ENCODE measurements at regions of chr1 and their contacts with region 1.

Region 1: GRCh38 chr1:215526553-215527151 is 40.5 kb upstream of the KCTD3 start:
- DNase-seq: no peak
- H3K4me3 Mint-ChIP-seq: no peak overlapping the region
- H3K27ac Mint-ChIP-seq: no peak overlapping the region
- H3K4me1 Mint-ChIP-seq: no peaks in the 10 kb centered on the region
- H3K27me3 Mint-ChIP-seq: peaks cover 2% of the 10 kb centered on the region

Region 2: DNA sequence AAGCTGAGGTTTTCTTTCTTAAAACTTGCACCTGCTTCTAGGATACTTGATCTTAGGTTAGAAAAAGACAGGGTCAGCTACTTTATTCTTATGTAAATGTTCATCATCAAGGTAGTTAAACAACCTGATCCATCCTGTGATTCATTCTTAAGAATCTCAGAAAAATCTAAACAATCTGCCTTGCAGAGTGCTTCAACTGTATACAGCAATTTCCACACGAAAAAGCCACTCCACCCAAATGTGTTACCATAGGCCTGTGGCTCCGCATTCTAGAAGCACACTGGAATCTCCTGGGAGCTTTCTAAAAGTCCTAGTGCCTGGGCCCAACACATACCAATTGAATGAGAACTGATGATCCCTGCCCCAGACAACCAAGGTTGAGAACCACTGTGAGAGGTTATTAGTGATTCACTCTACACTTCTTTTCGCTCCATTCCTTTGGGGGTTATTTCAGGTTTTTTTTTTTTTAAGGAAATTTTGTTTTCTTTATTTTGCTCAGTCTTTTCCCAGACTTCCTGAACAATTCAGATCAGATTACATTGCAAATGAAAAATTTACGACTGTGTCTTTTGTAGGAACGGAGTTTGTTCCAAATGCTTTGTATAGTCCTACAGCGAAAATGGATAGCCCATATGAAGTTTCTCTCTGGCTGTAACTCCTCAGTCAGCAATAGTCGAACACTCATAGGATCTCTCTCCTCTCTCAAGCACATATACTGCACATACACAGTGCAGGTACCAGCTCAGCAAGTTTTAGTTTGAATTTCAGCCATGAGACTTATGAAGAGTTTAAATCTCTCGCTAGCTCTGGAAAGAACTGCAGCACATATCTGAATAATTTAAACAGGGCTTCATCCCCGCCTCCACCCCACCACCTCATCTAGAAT is 1229.5 kb before region 1 on chr1:
- intact Hi-C with region 1: no loop called
- DNase-seq: no peak
- H3K4me3 Mint-ChIP-seq: no peak overlapping the region
- H3K27ac Mint-ChIP-seq: no peak overlapping the region
- H3K4me1 Mint-ChIP-seq: no peaks in the 10 kb centered on the region
- H3K27me3 Mint-ChIP-seq: no peaks in the 10 kb centered on the region

Region 3: DNA sequence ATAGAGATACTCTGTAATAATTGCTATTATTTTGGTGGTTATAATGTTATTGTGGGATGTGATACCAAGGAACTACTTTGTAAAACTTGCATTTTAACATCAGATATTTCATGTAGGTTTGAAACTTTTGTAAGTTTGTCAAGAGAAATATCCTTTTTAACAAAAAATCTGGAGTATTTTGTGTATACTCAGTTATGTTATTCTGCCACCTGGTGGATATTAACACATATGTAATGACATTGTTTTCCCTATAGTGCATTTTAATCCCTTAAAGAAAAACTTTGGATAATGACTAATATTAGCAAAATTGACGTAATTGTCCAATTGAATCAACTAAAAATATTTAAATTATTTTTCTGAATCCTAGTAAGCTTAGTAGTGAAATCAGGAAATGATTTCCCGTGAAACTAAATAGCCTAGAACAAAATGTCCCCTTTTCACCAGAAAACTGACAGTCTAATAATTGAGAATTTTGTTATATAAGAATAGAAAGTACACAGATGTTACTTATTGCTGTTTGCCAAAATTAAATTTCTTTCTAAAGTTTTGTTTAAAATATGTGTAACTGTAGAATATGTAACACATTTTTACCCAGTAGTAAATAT is 80.0 kb after region 1 on chr1:
- intact Hi-C with region 1: loop called (anchors 5 kb)
- DNase-seq: no peak
- H3K4me3 Mint-ChIP-seq: no peak overlapping the region
- H3K27ac Mint-ChIP-seq: no peak overlapping the region
- H3K4me1 Mint-ChIP-seq: no peaks in the 10 kb centered on the region
- H3K27me3 Mint-ChIP-seq: no peaks in the 10 kb centered on the region

Measured in activated T-helper 1 cell treated with anti-CD3 and anti-CD28 coated beads, Interleukin-12 subunit alpha, Interleukin-12 subunit beta, Interleukin-2, Interleukin-4 antibody, amounts not matched to agents 30 ng/mL and 10 ng/mL and 1 ng/mL, durations not matched to agents 14 hours and 24 hours and 36 hours (primary cell).